Endothelial cell of umbilical vein (primary cell): ENCODE measurements at regions of chr4 and their contacts with region 1.

Region 1: GRCh38 chr4:48016141-48017103 is at the starts of genes CNGA1 and NIPAL1:
- DNase-seq: peak; percentile 63
- H3K4me3 ChIP-seq: peak within 1 kb of the TSS; percentile 40 to 58 (median 46)
- H3K27ac ChIP-seq: peak within 1 kb of the TSS; percentile 64
- H3K4me1 ChIP-seq: peaks cover 10% of the 10 kb centered on the region
- H3K27me3 ChIP-seq: peaks cover 0 to 4% of the 10 kb centered on the region in 2 experiments
- CTCF ChIP-seq: peak; percentile 18 to 62
- POLR2A ChIP-seq: no peak
- total RNA-seq, gene CNGA1: not detected in 2 replicates
- total RNA-seq, gene NIPAL1: 1.4 and 1.7 TPM in 2 replicates

Region 2: DNA sequence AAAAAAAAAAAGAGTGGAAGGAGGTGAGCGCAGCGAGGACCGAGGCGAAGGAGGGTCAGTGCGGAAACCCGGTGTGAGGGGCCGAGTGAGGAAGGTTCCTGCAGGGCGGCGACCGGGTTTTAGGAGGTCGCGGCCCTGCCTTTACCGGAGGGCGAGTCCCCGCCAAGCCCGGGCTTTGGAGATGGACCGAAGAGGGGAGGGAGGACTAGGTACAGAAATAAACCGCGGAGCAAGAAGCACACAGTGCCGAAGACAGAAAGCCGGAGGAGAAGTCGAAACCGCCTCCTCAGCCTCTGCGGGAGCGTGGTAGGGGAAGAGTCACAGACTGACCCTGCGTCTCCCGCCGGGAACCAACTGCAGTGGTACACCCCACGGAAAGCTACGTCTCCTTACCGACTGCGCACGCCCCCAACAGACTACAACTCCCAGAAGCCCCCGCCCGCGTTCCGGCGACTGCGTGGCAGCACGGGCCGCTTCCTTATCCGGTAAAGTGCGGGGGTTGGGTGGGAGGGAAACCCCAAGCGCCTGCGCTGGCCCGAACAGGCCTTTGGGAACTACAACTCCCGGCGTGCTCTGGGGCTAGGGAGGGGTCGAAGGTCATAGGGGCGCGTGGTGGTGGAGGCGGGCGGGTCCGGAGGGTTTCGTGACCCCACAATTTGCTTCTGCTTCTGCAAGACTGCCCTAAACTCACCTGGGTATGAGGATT is 102.0 kb before region 1 on chr4 and contains the start of gene NFXL1:
- CTCF ChIA-PET with region 1: no interaction called
- POLR2A ChIA-PET with region 1: no interaction called
- dilution Hi-C with region 1: no loop called
- intact Hi-C with region 1: loop called (anchors 1 kb)
- DNase-seq: peak; percentile 97
- H3K4me3 ChIP-seq: peak within 1 kb of the TSS; percentile 73 to 93 (median 83)
- H3K27ac ChIP-seq: peak within 1 kb of the TSS; percentile 54
- H3K4me1 ChIP-seq: peaks cover 17% of the 10 kb centered on the region
- H3K27me3 ChIP-seq: no peaks in the 10 kb centered on the region
- CTCF ChIP-seq: no peak
- POLR2A ChIP-seq: peak; percentile 93
- total RNA-seq, gene NFXL1: 11.8 and 14.6 TPM in 2 replicates

Region 3: GRCh38 chr4:48033825-48034413 is 17.5 kb after region 1 on chr4:
- CTCF ChIA-PET with region 1: interaction called, 32 read pairs
- POLR2A ChIA-PET with region 1: no interaction called
- dilution Hi-C with region 1: no loop called
- intact Hi-C with region 1: no loop called
- DNase-seq: peak; percentile 53
- H3K4me3 ChIP-seq: no peak overlapping the region
- H3K27ac ChIP-seq: no peak overlapping the region
- H3K4me1 ChIP-seq: no peaks in the 10 kb centered on the region
- H3K27me3 ChIP-seq: no peaks in the 10 kb centered on the region
- CTCF ChIP-seq: peak; percentile 48 to 53
- POLR2A ChIP-seq: no peak

Region 4: DNA sequence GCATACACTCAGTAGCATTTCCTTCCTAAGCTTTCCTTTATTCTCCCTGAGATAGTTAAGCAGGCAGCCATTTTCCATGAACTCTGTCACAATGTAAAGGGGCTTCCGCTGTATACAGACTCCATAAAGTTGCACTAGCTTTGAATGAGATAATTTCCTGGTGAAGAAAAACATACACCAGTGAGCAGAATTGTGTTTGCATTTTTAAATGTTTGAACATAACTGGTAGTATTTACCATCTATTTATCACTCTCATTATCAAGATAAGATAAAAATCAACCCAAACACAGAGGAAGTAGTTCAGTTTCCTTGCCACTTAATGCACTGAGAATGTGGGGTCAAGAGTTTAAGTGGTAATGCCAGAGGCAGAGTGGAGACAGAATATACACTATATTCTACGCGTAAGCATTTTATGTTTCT is 63.6 kb after region 1 on chr4:
- CTCF ChIA-PET with region 1: interaction called, 3 read pairs
- POLR2A ChIA-PET with region 1: no interaction called
- dilution Hi-C with region 1: no loop called
- intact Hi-C with region 1: loop called (anchors 1 kb)
- DNase-seq: peak; percentile 72
- H3K4me3 ChIP-seq: peak overlapping the region in 1 of 3 experiments; percentile 38
- H3K27ac ChIP-seq: peak overlapping the region; percentile 37
- H3K4me1 ChIP-seq: peaks cover 28% of the 10 kb centered on the region
- H3K27me3 ChIP-seq: no peaks in the 10 kb centered on the region
- CTCF ChIP-seq: no peak
- POLR2A ChIP-seq: no peak